ENCODE measurements at regions of chr2 and their contacts with region 1.

Region 1: DNA sequence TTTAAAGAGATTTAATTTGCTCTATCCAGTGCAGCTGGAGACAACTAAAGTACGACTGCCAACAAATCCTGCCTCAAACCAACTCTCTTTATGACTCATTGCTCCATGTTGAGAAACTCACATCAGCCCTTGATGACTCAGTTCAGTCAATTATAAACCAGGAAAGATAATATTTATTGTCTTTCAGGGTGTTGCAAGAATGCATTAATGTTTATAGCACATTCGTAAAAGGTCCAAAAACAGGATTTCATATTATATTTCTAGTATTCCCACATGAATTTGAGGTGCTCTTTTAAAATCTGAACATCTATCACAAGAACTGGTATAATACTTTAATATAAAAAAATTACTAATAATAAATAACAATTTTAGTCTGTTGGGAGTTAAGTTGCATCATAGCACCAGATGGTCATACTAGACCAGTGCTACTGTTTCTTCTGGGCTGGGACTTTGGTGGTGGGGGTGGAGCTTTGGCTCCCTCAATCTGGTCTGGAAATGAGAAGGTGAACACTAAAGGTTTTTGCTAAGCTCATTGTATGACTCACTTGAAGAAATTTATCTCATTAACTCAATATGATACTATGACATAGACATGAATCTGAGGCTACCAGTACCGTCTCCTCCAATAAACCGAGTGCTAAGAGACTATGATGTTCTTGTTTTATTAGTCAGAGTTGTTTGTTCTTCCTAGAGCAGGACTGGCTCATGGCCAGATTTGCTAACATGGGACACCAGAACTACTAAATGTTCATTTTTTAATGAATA is 26.6 kb upstream of the MAP3K20 start:
- DNase-seq: peak; percentile 74
- H3K4me3 Mint-ChIP-seq: no peak overlapping the region
- H3K27ac Mint-ChIP-seq: no peak overlapping the region
- H3K4me1 Mint-ChIP-seq: peaks cover 15% of the 10 kb centered on the region
- H3K27me3 Mint-ChIP-seq: peaks cover 25% of the 10 kb centered on the region

Region 2: GRCh38 chr2:173075781-173076580 is 26.9 kb after region 1 on chr2 and contains the start of gene MAP3K20:
- CTCF ChIA-PET with region 1: no interaction called
- POLR2A ChIA-PET with region 1: no interaction called
- intact Hi-C with region 1: loop called (anchors 2 kb)
- DNase-seq: peak; percentile 60
- H3K4me3 Mint-ChIP-seq: peak within 1 kb of the TSS; percentile 72
- H3K27ac Mint-ChIP-seq: no peak within 1 kb of the TSS
- H3K4me1 Mint-ChIP-seq: peaks cover 14% of the 10 kb centered on the region
- H3K27me3 Mint-ChIP-seq: peaks cover 34% of the 10 kb centered on the region
- total RNA-seq, gene MAP3K20: 6.5 to 7.0 TPM

Region 3: GRCh38 chr2:173090973-173091660 is 42.0 kb after region 1 on chr2:
- CTCF ChIA-PET with region 1: no interaction called
- POLR2A ChIA-PET with region 1: no interaction called
- intact Hi-C with region 1: no loop called
- DNase-seq: no peak
- H3K4me3 Mint-ChIP-seq: no peak overlapping the region
- H3K27ac Mint-ChIP-seq: no peak overlapping the region
- H3K4me1 Mint-ChIP-seq: no peaks in the 10 kb centered on the region
- H3K27me3 Mint-ChIP-seq: peaks cover 8% of the 10 kb centered on the region

Region 4: DNA sequence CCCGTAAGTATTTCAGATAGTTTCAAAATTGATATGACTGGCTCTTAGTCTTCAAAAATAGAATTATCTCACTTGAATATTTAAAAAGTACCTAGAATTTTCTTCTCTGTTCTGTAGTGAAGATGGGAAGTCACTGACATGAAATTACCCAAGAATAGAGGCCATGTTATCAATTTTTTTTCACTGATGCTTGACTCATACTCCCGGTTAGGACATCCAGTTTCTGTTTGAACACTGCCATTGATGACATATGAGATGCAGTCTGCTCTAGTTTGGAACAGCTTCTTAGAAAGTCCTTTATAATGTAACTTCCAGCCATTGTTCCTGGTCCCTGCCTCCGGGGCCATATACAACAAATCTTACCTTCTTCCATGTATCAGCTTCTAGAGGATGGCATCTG is 52.6 kb after region 1 on chr2:
- CTCF ChIA-PET with region 1: no interaction called
- POLR2A ChIA-PET with region 1: no interaction called
- intact Hi-C with region 1: loop called (anchors 1 kb)
- DNase-seq: no peak
- H3K4me3 Mint-ChIP-seq: no peak overlapping the region
- H3K27ac Mint-ChIP-seq: no peak overlapping the region
- H3K4me1 Mint-ChIP-seq: peaks cover 15% of the 10 kb centered on the region
- H3K27me3 Mint-ChIP-seq: no peaks in the 10 kb centered on the region

Region 5: GRCh38 chr2:173134703-173135102 is 85.6 kb after region 1 on chr2:
- CTCF ChIA-PET with region 1: no interaction called
- POLR2A ChIA-PET with region 1: interaction called, 3 read pairs
- intact Hi-C with region 1: loop called (anchors 1 kb)
- DNase-seq: peak; percentile 20
- H3K4me3 Mint-ChIP-seq: no peak overlapping the region
- H3K27ac Mint-ChIP-seq: no peak overlapping the region
- H3K4me1 Mint-ChIP-seq: peaks cover 41% of the 10 kb centered on the region
- H3K27me3 Mint-ChIP-seq: peaks cover 46% of the 10 kb centered on the region

Region 6: DNA sequence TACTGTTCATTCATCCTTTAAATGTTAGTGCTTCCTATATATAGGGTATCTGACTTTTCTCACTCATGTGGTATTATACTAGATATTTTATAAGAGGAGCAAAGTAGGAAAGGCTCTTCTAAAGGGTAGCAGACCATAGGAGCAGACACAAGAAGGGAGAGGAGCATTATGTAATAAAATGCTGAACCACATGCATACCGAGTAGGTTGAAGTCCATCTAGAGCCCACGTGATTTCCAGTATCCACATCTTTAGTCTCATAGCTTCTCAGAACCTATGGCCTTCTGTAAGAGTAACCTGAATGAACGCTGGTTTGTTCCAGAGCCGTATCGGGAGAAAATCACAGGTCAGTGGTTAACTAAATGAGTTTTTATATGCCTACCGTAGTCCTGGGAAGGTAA is 112.4 kb after region 1 on chr2:
- CTCF ChIA-PET with region 1: no interaction called
- POLR2A ChIA-PET with region 1: no interaction called
- intact Hi-C with region 1: no loop called
- DNase-seq: no peak
- H3K4me3 Mint-ChIP-seq: no peak overlapping the region
- H3K27ac Mint-ChIP-seq: no peak overlapping the region
- H3K4me1 Mint-ChIP-seq: no peaks in the 10 kb centered on the region
- H3K27me3 Mint-ChIP-seq: peaks cover 6% of the 10 kb centered on the region

Region 7: DNA sequence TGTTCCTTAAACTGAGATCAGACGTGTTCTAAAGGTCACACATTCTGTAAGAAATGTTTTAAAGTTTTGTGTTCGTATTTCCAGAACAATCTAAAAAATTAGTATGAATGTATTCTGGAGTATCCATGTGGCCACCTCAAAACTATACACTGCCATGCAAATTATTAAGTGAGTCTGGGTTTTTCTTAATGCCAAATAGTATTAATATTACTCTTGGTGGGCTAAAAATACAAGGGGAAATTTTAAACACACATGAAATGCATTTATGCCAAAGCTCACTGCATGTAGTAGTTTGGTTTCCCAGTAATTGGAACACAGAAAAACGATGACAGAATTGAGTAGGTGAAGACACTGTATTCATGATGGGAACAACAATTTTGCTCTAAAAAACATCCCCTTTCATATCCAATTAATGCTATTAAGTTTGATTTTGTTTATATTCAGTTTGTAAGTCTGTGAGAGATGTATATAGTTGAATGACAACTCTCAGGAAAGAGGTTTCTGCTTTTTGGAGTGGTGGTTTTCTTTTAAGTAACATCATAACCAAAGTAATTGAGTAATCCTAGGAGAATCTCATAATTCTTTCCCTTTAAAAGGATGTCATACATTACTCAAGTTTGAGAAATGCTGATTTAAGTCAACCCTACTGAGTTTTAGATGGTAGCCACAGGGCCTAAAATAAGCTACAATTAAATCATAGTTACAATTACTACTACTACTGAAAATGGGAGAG is 229.9 kb after region 1 on chr2:
- CTCF ChIA-PET with region 1: no interaction called
- POLR2A ChIA-PET with region 1: no interaction called
- intact Hi-C with region 1: loop called (anchors 1 kb)
- DNase-seq: no peak
- H3K4me3 Mint-ChIP-seq: no peak overlapping the region
- H3K27ac Mint-ChIP-seq: peak overlapping the region; percentile 42
- H3K4me1 Mint-ChIP-seq: peaks cover 22% of the 10 kb centered on the region
- H3K27me3 Mint-ChIP-seq: peaks cover 15% of the 10 kb centered on the region

Measured in activated CD4-positive, alpha-beta memory T cell treated with anti-CD3 and anti-CD28 coated beads for 36 hours (primary cell).